ENCODE measurements at regions of chr2 and their contacts with region 1.

Region 1: DNA sequence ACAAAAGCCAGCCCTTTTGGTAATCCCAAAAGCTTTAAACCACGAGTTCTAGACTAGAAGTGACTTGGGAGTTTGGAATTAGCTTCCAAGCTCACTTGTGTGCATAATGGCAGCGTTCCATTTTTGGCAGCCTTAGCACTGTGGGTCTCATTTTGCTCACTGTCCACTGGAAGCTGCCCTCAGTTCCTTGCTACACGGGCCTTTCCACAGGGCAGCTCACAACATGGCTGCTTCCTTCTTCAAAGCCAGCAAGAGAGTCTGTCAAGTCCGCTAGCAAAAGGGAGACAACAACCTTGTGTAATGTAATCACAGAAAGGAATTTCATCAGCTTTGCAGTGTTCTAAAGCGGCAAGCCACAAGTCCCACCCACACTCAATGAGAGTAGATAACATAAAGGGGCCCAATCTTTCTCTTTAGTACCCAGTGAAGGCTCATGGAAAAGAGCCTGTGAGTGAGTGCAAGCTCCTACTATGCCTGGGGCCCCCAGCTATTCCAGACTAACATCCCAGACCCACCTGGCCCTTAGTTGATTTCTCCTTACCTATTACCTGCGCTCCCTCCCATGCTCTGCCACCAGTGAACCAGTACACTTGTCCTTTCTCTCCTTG is 239.7 kb upstream of the FBXO11 start:
- H3K4me3 ChIP-seq: no peak overlapping the region
- H3K27ac ChIP-seq: peak overlapping the region; percentile 0; the same call in 1 of the 2 replicates
- H3K4me1 ChIP-seq: peaks cover 4% of the 10 kb centered on the region; the same call in 1 of the 2 replicates
- CTCF ChIP-seq: no peak

Region 2: GRCh38 chr2:48157150-48157549 is 11.2 kb after region 1 on chr2:
- CTCF ChIA-PET with region 1: no interaction called
- POLR2A ChIA-PET with region 1: no interaction called
- H3K4me3 ChIP-seq: no peak overlapping the region
- H3K27ac ChIP-seq: no peak overlapping the region
- H3K4me1 ChIP-seq: no peaks in the 10 kb centered on the region
- CTCF ChIP-seq: no peak

Region 3: DNA sequence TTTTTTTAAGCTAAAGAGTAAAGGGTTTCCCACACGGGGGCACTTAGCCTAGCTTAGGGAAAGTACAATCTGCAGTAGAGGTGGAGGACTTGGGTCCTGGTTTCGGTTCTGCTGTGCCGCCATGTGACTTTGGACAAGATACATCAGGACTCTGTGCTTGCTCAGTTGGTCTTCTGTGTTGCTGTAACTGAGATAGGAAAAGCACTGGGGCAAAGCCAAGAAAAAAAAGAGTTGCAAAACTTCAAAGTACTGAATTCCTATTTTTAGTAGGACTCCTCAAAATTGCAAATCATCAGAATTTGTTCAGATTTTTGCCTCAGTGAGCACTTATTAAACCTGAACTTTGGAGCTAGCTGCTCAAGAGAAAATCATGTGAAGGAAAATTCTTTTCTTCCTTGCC is 287.7 kb after region 1 on chr2:
- CTCF ChIA-PET with region 1: no interaction called
- POLR2A ChIA-PET with region 1: interaction called, 11 read pairs
- H3K4me3 ChIP-seq: no peak overlapping the region
- H3K27ac ChIP-seq: no peak overlapping the region
- H3K4me1 ChIP-seq: no peaks in the 10 kb centered on the region
- CTCF ChIP-seq: no peak

Measured in HEK293 (cell line).